ENCODE measurements at regions of chr7 and their contacts with region 1.

Region 1: DNA sequence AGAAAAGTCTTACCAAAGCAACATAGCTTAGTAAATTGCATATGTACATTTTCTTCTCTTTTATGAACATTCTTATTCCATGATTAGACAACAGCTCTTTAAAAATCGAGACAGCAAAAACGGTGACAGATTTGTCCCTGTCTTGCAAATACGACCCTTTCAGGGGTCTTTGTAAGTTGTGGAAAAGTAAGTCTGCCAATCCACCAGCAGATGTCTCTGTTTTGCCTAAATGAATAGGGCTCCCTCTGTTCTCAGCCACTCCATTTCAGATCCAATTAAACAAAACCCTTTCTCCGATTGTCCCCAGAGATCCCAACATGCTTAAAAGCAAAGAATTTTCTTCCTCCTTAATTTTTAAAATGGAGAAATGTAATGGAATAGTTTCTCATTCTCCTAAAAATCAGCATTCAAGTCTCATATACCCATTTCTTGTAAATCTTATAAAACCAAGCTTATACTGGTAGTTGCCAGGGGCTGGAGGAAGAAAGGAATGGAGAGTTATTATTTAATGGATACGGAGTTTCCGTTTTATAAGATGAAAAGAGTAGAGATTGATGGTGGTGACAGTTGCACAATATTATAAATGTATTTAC is 61.0 kb upstream of the NFE2L3 start:
- DNase-seq: no peak
- ATAC-seq: peak; percentile 63 to 80

Region 2: GRCh38 chr7:25002786-25003185 is 1088.2 kb before region 1 on chr7:
- intact Hi-C with region 1: no loop called
- DNase-seq: no peak
- ATAC-seq: no peak

Region 3: DNA sequence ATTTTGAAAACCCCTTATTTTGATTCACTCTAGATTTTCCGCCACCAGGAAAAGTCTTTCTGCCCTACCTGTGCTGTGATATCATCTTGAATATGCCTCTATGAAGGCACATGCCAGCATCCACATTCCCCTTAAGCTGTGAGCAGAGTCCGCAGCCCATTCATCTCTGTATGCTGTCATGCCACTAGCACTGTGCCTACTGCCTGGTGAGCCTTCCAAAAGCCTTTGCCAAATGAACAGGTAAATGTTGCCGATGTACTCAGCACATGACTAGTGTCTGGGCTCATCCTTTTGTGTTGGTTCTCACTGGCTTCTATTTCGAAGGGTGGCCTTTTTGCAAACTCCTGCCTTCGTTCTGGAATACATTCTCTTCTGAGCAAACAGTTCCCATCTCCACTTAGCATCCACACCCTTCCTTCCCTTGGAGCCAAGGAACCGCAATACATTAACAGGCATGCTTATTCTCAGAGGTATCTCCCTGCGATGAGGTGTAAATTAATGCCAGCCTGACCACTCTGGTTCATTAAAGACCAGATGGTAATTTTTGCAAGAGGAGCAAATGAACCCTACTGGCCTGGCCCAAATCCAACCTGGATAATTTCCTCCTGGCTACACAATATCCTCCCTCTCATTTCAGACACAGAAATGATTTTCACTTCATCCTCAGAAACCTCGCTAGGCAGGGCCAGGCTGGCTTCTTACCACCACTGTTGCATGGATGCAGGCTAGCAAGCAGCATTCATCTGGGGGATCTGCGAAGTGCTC is 278.8 kb before region 1 on chr7:
- intact Hi-C with region 1: no loop called
- DNase-seq: no peak
- ATAC-seq: no peak

Region 4: DNA sequence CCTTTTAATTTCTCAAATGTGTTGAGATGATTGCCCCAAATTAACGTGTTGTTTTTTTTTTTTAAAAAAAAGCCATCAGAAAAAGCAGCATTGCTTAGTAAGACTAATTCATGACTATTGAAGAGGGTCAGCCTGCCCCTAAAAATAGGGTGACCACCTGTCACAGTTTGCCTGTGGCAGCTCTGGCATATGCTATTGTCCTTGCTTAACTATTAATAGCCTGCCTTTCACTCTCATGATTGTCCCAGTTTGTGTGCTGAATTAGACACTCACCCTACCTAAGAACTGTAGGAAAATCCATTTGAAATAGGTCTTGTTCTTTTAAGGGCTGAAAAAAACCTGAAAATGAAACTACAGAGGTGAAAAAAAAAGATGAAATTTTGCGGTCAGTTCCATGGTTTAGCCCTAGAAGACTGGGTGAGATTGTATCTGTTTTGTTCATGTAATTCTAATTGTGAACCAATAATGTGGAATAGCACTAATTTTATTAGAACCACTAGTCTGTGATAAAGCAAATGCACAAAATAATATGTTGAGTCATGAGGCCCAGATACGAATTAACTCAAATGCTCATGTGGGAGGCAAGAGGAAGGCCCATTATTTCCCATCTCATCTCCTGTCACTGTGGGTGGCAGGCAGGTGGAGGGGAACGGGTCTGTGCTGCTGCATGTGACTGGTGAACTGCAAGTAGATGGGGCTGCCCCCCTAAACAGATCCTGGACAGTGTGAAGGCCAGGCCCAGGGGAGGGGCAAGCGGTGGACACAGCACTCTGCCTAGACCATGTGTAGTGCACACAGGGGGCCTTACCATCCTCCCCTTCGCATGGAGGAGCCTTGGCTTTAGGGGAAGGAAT is 204.4 kb before region 1 on chr7:
- intact Hi-C with region 1: no loop called
- DNase-seq: no peak
- ATAC-seq: no peak

Region 5: GRCh38 chr7:25913598-25914224 is 177.3 kb before region 1 on chr7:
- intact Hi-C with region 1: no loop called
- DNase-seq: no peak
- ATAC-seq: no peak

Region 6: GRCh38 chr7:26200444-26201246 is 109.6 kb after region 1 on chr7 and contains the start of gene HNRNPA2B1:
- intact Hi-C with region 1: loop called in 1 of 2 experiments (anchors 10 kb)
- DNase-seq: peak; percentile 97
- ATAC-seq: peak; percentile 83 to 85
- total RNA-seq, gene HNRNPA2B1: 330 to 390 TPM

Region 7: GRCh38 chr7:26284995-26285632 is 194.1 kb after region 1 on chr7:
- intact Hi-C with region 1: loop called in 1 of 2 experiments (anchors 10 kb)
- DNase-seq: no peak
- ATAC-seq: no peak